WTC11 (cell line): ENCODE measurements at regions of chr1 and their contacts with region 1.

Region 1: GRCh38 chr1:59971464-59971911 is 44.9 kb upstream of the CYP2J2 start:
- DNase-seq: peak; percentile 79
- ATAC-seq: peak; percentile 93
- H3K4me3 Mint-ChIP-seq: peak overlapping the region; percentile 52
- H3K27ac Mint-ChIP-seq: no peak overlapping the region
- H3K4me1 Mint-ChIP-seq: peaks cover 3% of the 10 kb centered on the region; the same call in 1 of the 2 replicates
- H3K27me3 Mint-ChIP-seq: peaks cover 9% of the 10 kb centered on the region
- CTCF ChIP-seq: peak; percentile 93

Region 2: GRCh38 chr1:59779949-59780348 is 191.5 kb before region 1 on chr1:
- CTCF ChIA-PET with region 1: no interaction called
- POLR2A ChIA-PET with region 1: no interaction called
- DNase-seq: peak; percentile 14
- ATAC-seq: peak; percentile 74
- H3K4me3 Mint-ChIP-seq: no peak overlapping the region
- H3K27ac Mint-ChIP-seq: no peak overlapping the region
- H3K4me1 Mint-ChIP-seq: no peaks in the 10 kb centered on the region
- H3K27me3 Mint-ChIP-seq: no peaks in the 10 kb centered on the region
- CTCF ChIP-seq: no peak

Region 3: DNA sequence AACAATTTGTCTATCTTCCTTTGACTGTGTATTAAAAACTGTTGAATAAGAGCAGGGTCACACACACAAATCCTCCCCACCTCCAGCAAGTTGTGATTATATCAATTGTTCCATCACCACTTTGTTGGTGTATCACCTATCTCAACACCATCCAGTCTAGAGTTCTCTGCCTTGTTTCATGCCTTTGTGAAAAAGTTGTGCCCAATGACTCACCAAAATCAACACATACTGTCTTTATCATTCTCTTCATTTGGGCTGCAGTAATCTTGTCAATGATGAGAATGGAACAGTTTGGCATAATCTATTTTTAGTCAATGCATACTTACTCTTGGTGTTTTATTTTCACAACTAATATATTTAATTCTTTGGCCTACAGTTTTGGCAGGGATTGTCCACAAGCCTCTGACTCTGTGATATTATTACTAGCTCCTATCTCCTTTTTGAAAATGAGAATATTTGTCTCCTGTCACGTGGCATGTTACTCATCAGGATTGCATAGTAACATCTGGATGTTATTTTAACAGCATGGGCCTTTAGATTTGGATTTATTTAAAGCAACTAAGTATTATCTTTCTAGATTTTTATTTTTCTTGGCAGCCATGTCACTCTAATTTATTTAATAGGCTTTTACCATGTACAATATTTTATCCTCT is 97.0 kb after region 1 on chr1:
- CTCF ChIA-PET with region 1: no interaction called
- POLR2A ChIA-PET with region 1: no interaction called
- DNase-seq: no peak
- ATAC-seq: no peak
- H3K4me3 Mint-ChIP-seq: no peak overlapping the region
- H3K27ac Mint-ChIP-seq: no peak overlapping the region
- H3K4me1 Mint-ChIP-seq: 0 out of 2 replicates have a peak, but pooled peaks cover 3% of the 10 kb centered on the region
- H3K27me3 Mint-ChIP-seq: peaks cover 24% of the 10 kb centered on the region
- CTCF ChIP-seq: no peak

Region 4: GRCh38 chr1:60090655-60091054 is 119.2 kb after region 1 on chr1:
- CTCF ChIA-PET with region 1: interaction called, 10 read pairs
- POLR2A ChIA-PET with region 1: no interaction called
- DNase-seq: no peak
- ATAC-seq: no peak
- H3K4me3 Mint-ChIP-seq: no peak overlapping the region
- H3K27ac Mint-ChIP-seq: no peak overlapping the region
- H3K4me1 Mint-ChIP-seq: no peaks in the 10 kb centered on the region; the same call in 1 of the 2 replicates
- H3K27me3 Mint-ChIP-seq: no peaks in the 10 kb centered on the region; the same call in 1 of the 2 replicates
- CTCF ChIP-seq: no peak

Region 5: GRCh38 chr1:60126723-60127122 is 155.2 kb after region 1 on chr1:
- CTCF ChIA-PET with region 1: interaction called, 15 read pairs
- POLR2A ChIA-PET with region 1: interaction called, 3 read pairs
- DNase-seq: no peak
- ATAC-seq: peak; percentile 51; the same call in 1 of the 2 replicates
- H3K4me3 Mint-ChIP-seq: no peak overlapping the region
- H3K27ac Mint-ChIP-seq: no peak overlapping the region
- H3K4me1 Mint-ChIP-seq: no peaks in the 10 kb centered on the region
- H3K27me3 Mint-ChIP-seq: no peaks in the 10 kb centered on the region; the same call in 1 of the 2 replicates
- CTCF ChIP-seq: no peak

Region 6: DNA sequence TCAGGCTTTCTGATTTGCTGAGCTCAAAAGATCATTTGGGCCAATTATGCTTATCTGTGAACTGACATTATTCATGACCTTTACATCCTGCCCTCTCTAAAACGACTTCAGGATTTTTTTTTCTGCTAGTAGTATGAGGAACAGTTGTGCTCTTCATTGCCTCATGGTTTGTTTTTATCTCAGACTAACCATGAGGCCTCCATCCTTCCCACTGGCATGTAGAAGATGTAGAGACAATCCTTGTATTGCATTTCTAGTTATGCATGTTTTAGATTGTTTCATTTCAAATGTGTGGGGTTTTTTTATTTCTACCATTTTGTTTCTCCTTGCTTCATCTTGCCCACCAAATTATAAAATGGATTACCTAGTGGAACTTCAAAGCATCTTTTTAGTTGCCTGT is 184.9 kb after region 1 on chr1:
- CTCF ChIA-PET with region 1: interaction called, 29 read pairs
- POLR2A ChIA-PET with region 1: no interaction called
- DNase-seq: no peak
- ATAC-seq: no peak
- H3K4me3 Mint-ChIP-seq: no peak overlapping the region
- H3K27ac Mint-ChIP-seq: no peak overlapping the region
- H3K4me1 Mint-ChIP-seq: peaks cover 24% of the 10 kb centered on the region
- H3K27me3 Mint-ChIP-seq: no peaks in the 10 kb centered on the region
- CTCF ChIP-seq: no peak